ENCODE measurements at regions of chr2 and their contacts with region 1.

Region 1: DNA sequence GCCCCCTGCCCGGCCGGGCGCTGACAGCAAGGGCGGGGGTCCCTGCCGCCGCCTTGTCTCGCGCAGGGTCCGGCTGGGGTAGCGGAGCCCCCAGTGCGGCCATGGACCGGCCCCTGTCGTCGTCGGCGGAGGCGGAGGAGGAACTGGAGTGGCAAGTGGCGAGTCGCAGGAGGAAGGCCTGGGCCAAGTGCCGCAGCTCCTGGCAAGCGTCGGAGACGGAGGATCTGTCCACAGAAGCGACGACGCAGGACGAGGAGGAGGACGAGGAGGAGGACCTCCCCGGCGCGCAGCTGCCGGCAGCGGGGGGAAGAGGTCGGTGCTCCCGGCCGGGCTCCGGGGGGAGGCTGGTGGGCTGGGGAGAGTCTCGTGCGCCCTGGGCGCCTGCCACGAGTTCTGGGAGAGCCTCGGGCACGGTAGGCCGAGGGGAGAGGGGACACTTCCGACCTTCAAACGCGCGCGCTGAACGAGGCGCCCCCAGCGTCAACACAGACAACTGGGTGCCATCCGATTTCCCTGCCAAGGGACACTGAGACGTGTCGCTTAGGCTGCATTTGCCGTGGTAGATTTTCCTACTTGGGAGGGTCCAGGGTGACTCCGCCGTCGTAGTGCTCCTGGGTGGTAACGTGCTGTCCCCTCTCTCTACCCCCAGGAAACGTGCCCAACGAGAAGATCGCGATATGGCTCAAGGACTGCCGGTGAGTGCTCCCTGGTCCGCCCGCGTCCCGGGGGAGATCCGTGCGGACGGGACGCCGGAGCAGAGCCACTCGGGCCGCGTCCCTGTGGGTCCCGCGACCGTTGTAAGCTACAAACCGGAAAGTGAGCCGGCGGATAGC is 652 bp downstream of the ITPRID2 start:
- DNase-seq: peak; percentile 80
- ATAC-seq: peak; percentile 52
- H3K4me3 ChIP-seq: peak overlapping the region; percentile 76 to 92 (median 88)
- H3K4me3 Mint-ChIP-seq: peak overlapping the region; percentile 94
- H3K27ac ChIP-seq: peak overlapping the region; percentile 48 to 70
- H3K27ac Mint-ChIP-seq: peak overlapping the region; percentile 81
- H3K4me1 ChIP-seq: peaks cover 4 to 14% of the 10 kb centered on the region in 2 donors
- H3K4me1 Mint-ChIP-seq: peaks cover 31% of the 10 kb centered on the region
- H3K27me3 ChIP-seq: peaks cover 0 to 12% (median 2%) of the 10 kb centered on the region in 4 experiments
- H3K27me3 Mint-ChIP-seq: peaks cover 13% of the 10 kb centered on the region
- CTCF ChIP-seq: peak; percentile 48

Region 2: GRCh38 chr2:180006781-180007579 is 1885.2 kb before region 1 on chr2 and contains the start of gene CWC22:
- CTCF ChIA-PET with region 1: no interaction called
- POLR2A ChIA-PET with region 1: no interaction called
- intact Hi-C with region 1: loop called (anchors 1 kb)
- DNase-seq: peak; percentile 96
- ATAC-seq: peak; percentile 95
- H3K4me3 ChIP-seq: peak within 1 kb of the TSS; percentile 89 to 98 (median 91)
- H3K4me3 Mint-ChIP-seq: peak within 1 kb of the TSS; percentile 94
- H3K27ac ChIP-seq: peak within 1 kb of the TSS; percentile 88 to 99
- H3K27ac Mint-ChIP-seq: peak within 1 kb of the TSS; percentile 99
- H3K4me1 ChIP-seq: peaks cover 12 to 18% of the 10 kb centered on the region in 2 donors
- H3K4me1 Mint-ChIP-seq: peaks cover 39% of the 10 kb centered on the region
- H3K27me3 ChIP-seq: no peaks in the 10 kb centered on the region
- H3K27me3 Mint-ChIP-seq: no peaks in the 10 kb centered on the region
- CTCF ChIP-seq: no peak
- total RNA-seq, gene CWC22: 28.6 and 28.7 TPM in 2 replicates

Region 3: DNA sequence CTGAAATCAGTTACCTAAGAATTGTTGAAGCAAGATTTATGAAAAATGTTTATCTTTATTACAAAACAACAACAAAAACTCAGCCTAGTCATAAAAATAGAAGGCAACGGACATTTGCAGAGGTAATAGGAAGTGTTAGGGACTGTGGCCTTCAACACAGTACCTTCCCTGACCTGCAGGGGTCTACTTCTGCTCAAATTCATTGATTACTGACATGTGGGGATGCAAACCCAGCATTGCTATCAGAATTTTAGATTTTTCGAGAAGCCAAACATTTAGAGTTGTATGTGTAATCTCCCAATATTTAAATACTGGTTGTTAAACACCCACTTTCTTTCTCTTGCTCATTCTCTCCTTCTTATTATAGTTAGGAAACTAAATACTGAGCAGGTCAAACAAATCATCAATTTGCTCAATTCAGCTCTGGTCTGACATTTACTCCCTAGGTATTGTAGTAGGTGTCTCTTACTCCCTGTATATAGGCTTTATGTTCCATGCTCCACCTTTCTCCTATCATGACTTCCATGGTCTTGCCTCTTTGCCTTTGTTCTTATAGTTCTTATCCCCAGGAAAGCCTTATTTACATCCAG is 713.3 kb before region 1 on chr2:
- CTCF ChIA-PET with region 1: no interaction called
- POLR2A ChIA-PET with region 1: no interaction called
- intact Hi-C with region 1: loop called (anchors 10 kb)
- DNase-seq: peak; percentile 51
- ATAC-seq: peak; percentile 75
- H3K4me3 ChIP-seq: no peak overlapping the region
- H3K4me3 Mint-ChIP-seq: no peak overlapping the region
- H3K27ac ChIP-seq: no peak overlapping the region
- H3K27ac Mint-ChIP-seq: no peak overlapping the region
- H3K4me1 ChIP-seq: peaks cover 4 to 5% of the 10 kb centered on the region in 2 donors
- H3K4me1 Mint-ChIP-seq: peaks cover 9% of the 10 kb centered on the region
- H3K27me3 ChIP-seq: no peaks in the 10 kb centered on the region
- H3K27me3 Mint-ChIP-seq: no peaks in the 10 kb centered on the region
- CTCF ChIP-seq: peak; percentile 78

Region 4: GRCh38 chr2:181677912-181678586 is 214.1 kb before region 1 on chr2:
- CTCF ChIA-PET with region 1: no interaction called
- POLR2A ChIA-PET with region 1: no interaction called
- intact Hi-C with region 1: loop called (anchors 5 kb)
- DNase-seq: peak; percentile 63
- ATAC-seq: peak; percentile 50
- H3K4me3 ChIP-seq: no peak overlapping the region
- H3K4me3 Mint-ChIP-seq: no peak overlapping the region
- H3K27ac ChIP-seq: no peak overlapping the region
- H3K27ac Mint-ChIP-seq: peak overlapping the region; percentile 79
- H3K4me1 ChIP-seq: peaks cover 33 to 58% of the 10 kb centered on the region in 2 donors
- H3K4me1 Mint-ChIP-seq: peaks cover 47% of the 10 kb centered on the region
- H3K27me3 ChIP-seq: peaks cover 2 to 61% (median 58%) of the 10 kb centered on the region in 4 experiments
- H3K27me3 Mint-ChIP-seq: peaks cover 58% of the 10 kb centered on the region
- CTCF ChIP-seq: no peak

Region 5: GRCh38 chr2:181850936-181851560 is 41.1 kb before region 1 on chr2:
- CTCF ChIA-PET with region 1: no interaction called
- POLR2A ChIA-PET with region 1: no interaction called
- intact Hi-C with region 1: no loop called
- DNase-seq: peak; percentile 26
- ATAC-seq: no peak
- H3K4me3 ChIP-seq: no peak overlapping the region
- H3K4me3 Mint-ChIP-seq: peak overlapping the region; percentile 32
- H3K27ac ChIP-seq: no peak overlapping the region
- H3K27ac Mint-ChIP-seq: no peak overlapping the region
- H3K4me1 ChIP-seq: peaks cover 0 to 12% of the 10 kb centered on the region in 2 donors
- H3K4me1 Mint-ChIP-seq: peaks cover 11% of the 10 kb centered on the region
- H3K27me3 ChIP-seq: no peaks in the 10 kb centered on the region
- H3K27me3 Mint-ChIP-seq: no peaks in the 10 kb centered on the region
- CTCF ChIP-seq: no peak

Region 6: GRCh38 chr2:182715896-182716668 is 823.9 kb after region 1 on chr2 and contains the start of gene DNAJC10:
- CTCF ChIA-PET with region 1: no interaction called
- POLR2A ChIA-PET with region 1: no interaction called
- intact Hi-C with region 1: loop called (anchors 2 kb)
- DNase-seq: peak; percentile 96
- ATAC-seq: peak; percentile 82
- H3K4me3 ChIP-seq: peak within 1 kb of the TSS; percentile 58 to 91 (median 82)
- H3K4me3 Mint-ChIP-seq: no peak within 1 kb of the TSS
- H3K27ac ChIP-seq: peak within 1 kb of the TSS; percentile 95 to 96
- H3K27ac Mint-ChIP-seq: no peak within 1 kb of the TSS
- H3K4me1 ChIP-seq: peaks cover 37 to 46% of the 10 kb centered on the region in 2 donors
- H3K4me1 Mint-ChIP-seq: peaks cover 24% of the 10 kb centered on the region
- H3K27me3 ChIP-seq: no peaks in the 10 kb centered on the region
- H3K27me3 Mint-ChIP-seq: no peaks in the 10 kb centered on the region
- CTCF ChIP-seq: no peak
- total RNA-seq, gene DNAJC10: 115 and 117 TPM in 2 replicates